SK-N-SH (cell line): ENCODE measurements at regions of chr16 and their contacts with region 1.

Region 1: DNA sequence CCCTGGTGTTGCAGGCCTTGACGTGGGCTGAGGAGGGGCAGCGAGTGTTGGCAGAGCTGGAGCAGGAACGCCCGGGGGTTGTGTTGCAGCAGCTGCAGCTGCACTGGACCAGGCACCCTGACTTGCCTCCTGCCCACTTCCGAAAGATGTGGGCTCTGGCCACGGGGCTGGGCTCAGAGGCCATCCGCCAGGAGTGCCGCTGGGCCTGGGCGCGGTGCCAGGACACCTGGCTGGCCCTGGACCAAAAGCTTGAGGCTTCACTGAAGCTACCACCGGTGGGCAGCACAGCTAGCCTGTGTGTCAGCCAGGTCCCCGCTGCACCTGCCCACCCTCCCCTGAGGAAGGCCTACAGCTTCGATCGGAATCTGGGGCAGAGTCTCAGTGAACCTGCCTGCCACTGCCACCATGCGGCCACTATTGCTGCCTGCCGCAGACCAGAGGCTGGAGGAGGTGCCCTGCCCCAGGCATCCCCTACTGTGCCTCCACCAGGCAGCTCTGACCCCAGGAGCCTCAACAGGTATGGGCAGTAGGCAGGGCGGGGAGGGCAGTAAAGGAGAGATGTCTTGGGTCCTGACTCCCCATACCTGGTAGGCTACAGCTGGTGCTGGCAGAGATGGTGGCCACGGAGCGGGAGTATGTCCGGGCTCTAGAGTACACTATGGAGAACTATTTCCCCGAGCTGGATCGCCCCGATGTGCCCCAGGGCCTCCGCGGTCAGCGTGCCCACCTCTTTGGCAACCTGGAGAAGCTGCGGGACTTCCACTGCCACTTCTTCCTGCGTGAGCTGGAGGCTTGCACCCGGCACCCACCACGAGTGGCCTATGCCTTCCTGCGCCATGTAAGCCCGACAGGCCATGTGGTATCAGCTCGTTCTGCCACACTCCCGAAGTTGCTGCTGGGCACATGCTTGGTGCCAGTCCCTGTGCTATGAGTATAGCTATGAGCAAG is 5.6 kb downstream of the PLEKHG4 start:
- DNase-seq: peak; percentile 69
- H3K4me3 ChIP-seq: no peak overlapping the region
- H3K27ac ChIP-seq: peak overlapping the region in 1 of 2 experiments; percentile 48; a peak in 1 of 4 replicates
- H3K4me1 ChIP-seq: peaks cover 2 to 30% of the 10 kb centered on the region in 2 experiments; a peak in 2 of 4 replicates
- H3K27me3 ChIP-seq: no peaks in the 10 kb centered on the region
- CTCF ChIP-seq: peak; percentile 34
- EP300 ChIP-seq: no peak
- RAD21 ChIP-seq: peak; percentile 31; the same call in 1 of the 2 replicates

Region 2: DNA sequence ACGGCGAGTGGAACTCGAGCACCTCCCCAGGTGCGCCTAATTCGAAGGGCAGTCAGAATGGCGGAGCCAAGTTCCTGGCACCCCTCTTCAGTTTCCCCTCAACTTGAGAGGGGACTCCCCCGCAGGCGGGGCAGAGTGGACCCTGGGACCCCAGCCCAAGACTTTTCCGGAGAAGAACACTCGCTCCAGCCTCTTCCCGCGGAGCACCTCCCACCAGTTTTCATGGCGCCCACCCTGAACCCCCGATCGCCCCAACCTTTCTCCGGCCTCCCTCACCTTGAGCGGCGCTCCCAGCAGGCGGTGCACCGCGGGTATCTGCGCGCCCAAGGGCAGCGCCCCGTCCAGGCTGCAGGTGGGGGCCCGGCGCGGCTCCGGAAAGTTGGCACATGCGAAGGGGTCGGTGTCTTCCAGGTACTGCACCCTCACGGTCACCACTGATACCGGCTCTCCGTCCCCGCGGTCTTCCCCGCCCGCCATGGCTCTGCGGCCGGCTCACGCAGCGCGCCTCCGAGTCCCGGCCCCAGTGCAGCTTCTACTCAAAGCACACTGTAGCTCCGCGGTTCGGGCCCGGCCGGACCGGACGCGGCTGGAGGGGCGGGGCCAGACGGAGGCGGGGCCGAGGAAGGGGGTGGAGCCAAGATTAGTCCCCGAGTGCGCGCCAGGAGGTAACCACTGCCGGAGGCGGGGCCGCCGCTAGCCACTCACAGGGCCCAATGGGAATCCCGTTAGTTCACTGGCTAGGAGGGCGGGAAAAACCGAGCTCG is 37.9 kb before region 1 on chr16 and contains the start of gene FHOD1:
- CTCF ChIA-PET with region 1: interaction called, 21 read pairs
- POLR2A ChIA-PET with region 1: no interaction called
- DNase-seq: peak; percentile 93
- H3K4me3 ChIP-seq: peak within 1 kb of the TSS; percentile 92 to 95
- H3K27ac ChIP-seq: peak within 1 kb of the TSS; percentile 96
- H3K4me1 ChIP-seq: peaks cover 42 to 46% of the 10 kb centered on the region in 2 experiments
- H3K27me3 ChIP-seq: no peaks in the 10 kb centered on the region
- CTCF ChIP-seq: no peak
- EP300 ChIP-seq: no peak
- RAD21 ChIP-seq: no peak
- polyA plus RNA-seq, gene FHOD1: 53.2 and 70.9 TPM in 2 replicates

Region 3: GRCh38 chr16:67296422-67296821 is 11.4 kb after region 1 on chr16:
- CTCF ChIA-PET with region 1: interaction called, 23 read pairs
- POLR2A ChIA-PET with region 1: interaction called, 4 read pairs
- DNase-seq: no peak
- H3K4me3 ChIP-seq: no peak overlapping the region
- H3K27ac ChIP-seq: peak overlapping the region in 1 of 2 experiments; percentile 43; a peak in 3 of 4 replicates
- H3K4me1 ChIP-seq: peaks cover 0 to 8% of the 10 kb centered on the region in 2 experiments; a peak in 1 of 4 replicates
- H3K27me3 ChIP-seq: no peaks in the 10 kb centered on the region
- CTCF ChIP-seq: no peak
- EP300 ChIP-seq: no peak
- RAD21 ChIP-seq: no peak